Naive thymus-derived CD4-positive, alpha-beta T cell (primary cell): ENCODE measurements at regions of chr18 and their contacts with region 1.

Region 1: GRCh38 chr18:27599202-27599829 is 414.2 kb upstream of the CHST9 start:
- DNase-seq: peak in 1 of 9 donors; percentile 26
- ATAC-seq: no peak
- H3K4me3 ChIP-seq: no peak overlapping the region
- H3K4me3 Mint-ChIP-seq: no peak overlapping the region
- H3K27ac ChIP-seq: no peak overlapping the region
- H3K27ac Mint-ChIP-seq: no peak overlapping the region
- H3K4me1 ChIP-seq: no peaks in the 10 kb centered on the region
- H3K4me1 Mint-ChIP-seq: no peaks in the 10 kb centered on the region
- H3K27me3 ChIP-seq: no peaks in the 10 kb centered on the region
- H3K27me3 Mint-ChIP-seq: no peaks in the 10 kb centered on the region

Region 2: DNA sequence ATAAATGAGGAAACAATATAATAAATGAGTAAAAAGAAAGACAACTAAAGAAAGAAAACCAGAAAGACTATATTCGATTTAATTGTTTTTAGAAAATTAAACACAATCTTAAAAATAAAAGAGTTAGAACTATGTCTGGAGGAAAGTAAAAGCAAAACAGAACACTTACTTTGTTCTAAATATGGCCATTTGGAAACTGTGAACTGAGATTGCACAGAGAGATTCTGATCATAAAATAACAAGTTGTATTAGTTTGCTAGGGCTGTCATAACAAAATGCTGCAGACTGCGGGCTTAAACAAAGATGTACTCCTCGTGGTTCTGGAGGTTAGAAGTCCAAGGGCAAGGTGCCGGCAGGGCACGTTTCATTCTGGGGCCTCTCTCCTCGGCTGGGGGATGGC is 605.7 kb before region 1 on chr18:
- CTCF ChIA-PET with region 1: no interaction called
- POLR2A ChIA-PET with region 1: no interaction called
- intact Hi-C with region 1: no loop called
- DNase-seq: no peak
- ATAC-seq: no peak
- H3K4me3 ChIP-seq: no peak overlapping the region
- H3K4me3 Mint-ChIP-seq: no peak overlapping the region
- H3K27ac ChIP-seq: no peak overlapping the region
- H3K27ac Mint-ChIP-seq: no peak overlapping the region
- H3K4me1 ChIP-seq: no peaks in the 10 kb centered on the region
- H3K4me1 Mint-ChIP-seq: no peaks in the 10 kb centered on the region
- H3K27me3 ChIP-seq: no peaks in the 10 kb centered on the region
- H3K27me3 Mint-ChIP-seq: no peaks in the 10 kb centered on the region

Region 3: GRCh38 chr18:27017901-27018500 is 581.3 kb before region 1 on chr18:
- CTCF ChIA-PET with region 1: no interaction called
- POLR2A ChIA-PET with region 1: no interaction called
- intact Hi-C with region 1: loop called in 1 of 2 experiments (anchors 2 kb)
- DNase-seq: no peak
- ATAC-seq: no peak
- H3K4me3 ChIP-seq: no peak overlapping the region
- H3K4me3 Mint-ChIP-seq: no peak overlapping the region
- H3K27ac ChIP-seq: no peak overlapping the region
- H3K27ac Mint-ChIP-seq: no peak overlapping the region
- H3K4me1 ChIP-seq: no peaks in the 10 kb centered on the region
- H3K4me1 Mint-ChIP-seq: no peaks in the 10 kb centered on the region
- H3K27me3 ChIP-seq: no peaks in the 10 kb centered on the region
- H3K27me3 Mint-ChIP-seq: no peaks in the 10 kb centered on the region

Region 4: DNA sequence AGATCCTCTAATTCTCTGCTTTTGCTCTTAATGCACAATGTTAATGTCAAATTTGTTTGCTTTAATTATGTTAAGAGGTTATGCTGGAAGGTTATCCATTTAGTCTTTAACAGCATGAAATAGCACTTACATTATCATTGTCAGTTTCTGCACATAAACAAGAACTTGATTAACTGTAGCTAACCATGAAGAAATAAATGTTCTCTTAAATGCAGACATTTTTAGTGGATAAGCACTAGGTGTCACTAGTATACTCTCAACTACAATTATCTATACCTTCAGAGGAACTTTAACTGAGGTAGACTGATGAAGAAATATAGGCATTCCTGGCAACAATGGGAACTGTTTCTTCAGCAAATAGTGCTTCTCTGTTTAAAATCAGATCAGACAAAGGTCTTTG is 235.4 kb before region 1 on chr18:
- CTCF ChIA-PET with region 1: no interaction called
- POLR2A ChIA-PET with region 1: no interaction called
- intact Hi-C with region 1: loop called in 1 of 2 experiments (anchors 1 kb)
- DNase-seq: no peak
- ATAC-seq: no peak
- H3K4me3 ChIP-seq: no peak overlapping the region
- H3K4me3 Mint-ChIP-seq: no peak overlapping the region
- H3K27ac ChIP-seq: no peak overlapping the region
- H3K27ac Mint-ChIP-seq: no peak overlapping the region
- H3K4me1 ChIP-seq: no peaks in the 10 kb centered on the region
- H3K4me1 Mint-ChIP-seq: no peaks in the 10 kb centered on the region
- H3K27me3 ChIP-seq: no peaks in the 10 kb centered on the region
- H3K27me3 Mint-ChIP-seq: no peaks in the 10 kb centered on the region

Region 5: GRCh38 chr18:28204154-28204553 is 604.8 kb after region 1 on chr18:
- CTCF ChIA-PET with region 1: no interaction called
- POLR2A ChIA-PET with region 1: no interaction called
- intact Hi-C with region 1: no loop called
- DNase-seq: no peak
- ATAC-seq: no peak
- H3K4me3 ChIP-seq: no peak overlapping the region
- H3K4me3 Mint-ChIP-seq: no peak overlapping the region
- H3K27ac ChIP-seq: no peak overlapping the region
- H3K27ac Mint-ChIP-seq: no peak overlapping the region
- H3K4me1 ChIP-seq: no peaks in the 10 kb centered on the region
- H3K4me1 Mint-ChIP-seq: peaks cover 0 to 6% (median 0%) of the 10 kb centered on the region in 7 donors
- H3K27me3 ChIP-seq: no peaks in the 10 kb centered on the region
- H3K27me3 Mint-ChIP-seq: no peaks in the 10 kb centered on the region